ENCODE measurements at regions of chr10 and their contacts with region 1.

Region 1: DNA sequence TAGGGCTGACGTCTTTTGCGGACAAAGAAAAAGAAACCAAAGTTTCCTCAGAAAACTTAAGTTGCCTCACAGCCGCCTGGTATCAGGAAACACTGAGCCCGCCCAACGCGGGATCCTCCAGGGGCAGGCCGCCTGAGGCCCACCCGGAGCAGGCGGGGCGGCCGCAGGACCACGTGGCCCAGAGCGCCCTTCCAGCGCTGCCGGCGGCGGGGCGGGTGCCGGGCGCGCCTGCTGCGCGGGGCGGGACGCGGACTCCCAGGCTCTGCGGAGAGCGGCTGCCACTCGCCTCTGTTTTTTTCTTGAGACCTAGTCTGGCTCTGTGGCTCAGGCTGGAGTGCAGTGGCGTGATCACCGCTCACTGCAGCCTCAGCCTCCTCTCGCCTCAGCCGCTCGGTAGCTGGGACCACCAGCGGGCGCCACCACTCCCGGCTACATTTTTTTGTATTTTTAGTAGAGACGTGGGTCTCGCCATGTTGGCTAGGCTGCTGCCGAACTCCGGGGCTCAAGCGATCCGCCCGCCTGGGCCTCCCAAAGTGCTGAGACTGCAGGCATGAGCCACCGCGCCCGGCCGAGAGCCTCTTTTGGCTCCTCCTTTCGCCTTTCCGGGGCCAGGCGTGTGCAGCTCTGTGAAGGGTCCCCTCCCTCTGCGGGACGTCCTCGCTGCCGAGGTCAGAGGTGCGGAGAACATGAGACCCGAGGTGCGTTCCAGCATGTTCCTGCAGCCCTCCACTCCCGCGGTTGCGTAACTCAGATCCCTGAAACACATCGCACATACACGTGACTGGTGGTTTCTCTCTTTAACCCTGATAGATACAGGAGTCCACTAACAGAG is 11.6 kb upstream of the HNRNPF start:
- DNase-seq: peak; percentile 78 to 91 (median 89)
- H3K4me3 ChIP-seq: peak overlapping the region; percentile 90
- H3K4me3 Mint-ChIP-seq: peak overlapping the region; percentile 92 to 94 (median 94)
- H3K27ac ChIP-seq: peak overlapping the region; percentile 88
- H3K27ac Mint-ChIP-seq: peak overlapping the region; percentile 97 to 100 (median 98)
- H3K4me1 ChIP-seq: peaks cover 37% of the 10 kb centered on the region
- H3K4me1 Mint-ChIP-seq: peaks cover 33 to 39% (median 38%) of the 10 kb centered on the region in 3 donors
- H3K27me3 ChIP-seq: no peaks in the 10 kb centered on the region
- H3K27me3 Mint-ChIP-seq: no peaks in the 10 kb centered on the region

Region 2: DNA sequence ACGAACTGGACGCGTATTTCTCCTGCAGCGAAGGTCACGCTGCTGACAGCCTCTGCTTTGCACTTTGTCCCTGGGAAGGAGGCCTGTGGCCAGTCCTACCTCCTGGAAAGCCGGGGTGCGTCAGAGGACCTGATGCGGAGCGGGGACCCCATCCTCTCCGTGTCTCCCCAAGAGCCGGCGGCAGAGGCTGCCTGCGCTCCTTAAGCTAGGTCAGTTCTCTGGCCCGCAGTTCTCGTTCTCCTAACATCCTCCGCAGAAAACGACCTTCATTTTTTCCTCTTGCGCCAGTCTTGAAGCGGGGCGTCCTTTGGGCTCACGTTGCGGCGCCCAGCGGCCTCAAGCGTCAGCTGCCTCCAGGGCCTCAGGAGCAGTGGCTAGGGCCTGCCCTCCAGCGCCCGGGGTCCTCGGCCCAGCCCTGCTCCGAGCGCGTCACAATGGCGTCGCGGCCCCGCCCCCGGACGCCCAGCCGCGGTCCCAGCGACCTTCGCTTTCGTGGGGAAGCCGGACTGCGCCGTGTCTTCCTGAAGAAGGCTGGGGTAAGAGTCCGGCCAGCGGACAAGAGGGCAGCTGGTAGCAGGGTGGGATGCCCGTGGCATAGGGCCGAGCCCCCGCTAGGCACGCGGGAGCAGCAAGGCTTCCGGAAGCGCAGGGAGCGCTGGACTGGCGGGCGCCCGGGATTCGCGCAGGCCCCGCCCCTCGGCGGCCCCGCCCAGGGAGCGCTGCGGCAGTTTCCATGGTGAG is 16.0 kb after region 1 on chr10 and contains the start of gene ZNF487:
- CTCF ChIA-PET with region 1: interaction called, 11 read pairs
- POLR2A ChIA-PET with region 1: interaction called, 4 read pairs
- DNase-seq: peak; percentile 80 to 97 (median 94)
- H3K4me3 ChIP-seq: peak within 1 kb of the TSS; percentile 99
- H3K4me3 Mint-ChIP-seq: peak within 1 kb of the TSS; percentile 94 to 100 (median 97)
- H3K27ac ChIP-seq: peak within 1 kb of the TSS; percentile 100
- H3K27ac Mint-ChIP-seq: peak within 1 kb of the TSS; percentile 96 to 100 (median 99)
- H3K4me1 ChIP-seq: peaks cover 12% of the 10 kb centered on the region
- H3K4me1 Mint-ChIP-seq: peaks cover 20 to 36% (median 30%) of the 10 kb centered on the region in 3 donors
- H3K27me3 ChIP-seq: no peaks in the 10 kb centered on the region
- H3K27me3 Mint-ChIP-seq: no peaks in the 10 kb centered on the region
- total RNA-seq, gene ZNF487: 1.5 to 4.2 TPM

Region 3: GRCh38 chr10:43606322-43607198 is 186.0 kb after region 1 on chr10 and contains the start of gene ZNF485:
- CTCF ChIA-PET with region 1: no interaction called
- POLR2A ChIA-PET with region 1: no interaction called
- DNase-seq: peak; percentile 38 to 76 (median 54)
- H3K4me3 ChIP-seq: peak within 1 kb of the TSS; percentile 72
- H3K4me3 Mint-ChIP-seq: peak within 1 kb of the TSS; percentile 78 to 91 (median 83)
- H3K27ac ChIP-seq: peak within 1 kb of the TSS; percentile 51
- H3K27ac Mint-ChIP-seq: peak within 1 kb of the TSS; percentile 62 to 88 (median 73)
- H3K4me1 ChIP-seq: peaks cover 13% of the 10 kb centered on the region
- H3K4me1 Mint-ChIP-seq: peaks cover 29 to 42% (median 33%) of the 10 kb centered on the region in 3 donors
- H3K27me3 ChIP-seq: no peaks in the 10 kb centered on the region
- H3K27me3 Mint-ChIP-seq: no peaks in the 10 kb centered on the region
- total RNA-seq, gene ZNF485: 5.5 to 7.6 TPM